GM12878 (cell line): ENCODE measurements at regions of chr22 and their contacts with region 1.

Region 1: GRCh38 chr22:37566903-37567820 is 6.9 kb downstream of the CDC42EP1 start:
- DNase-seq: peak; percentile 84
- ATAC-seq: peak; percentile 96
- H3K4me3 ChIP-seq: no peak overlapping the region
- H3K27ac ChIP-seq: no peak overlapping the region
- H3K4me1 ChIP-seq: peaks cover 11% of the 10 kb centered on the region
- H3K27me3 ChIP-seq: peaks cover 0 to 1% of the 10 kb centered on the region in 2 experiments; a peak in 2 of 4 replicates
- CTCF ChIP-seq: peak; percentile 95 to 97 (median 95)
- EP300 ChIP-seq: no peak; a peak in 1 of 4 replicates
- POLR2A ChIP-seq: no peak
- RAD21 ChIP-seq: peak; percentile 88

Region 2: GRCh38 chr22:37457093-37457893 is 109.9 kb before region 1 on chr22:
- CTCF ChIA-PET with region 1: interaction called, 15 read pairs
- POLR2A ChIA-PET with region 1: no interaction called
- RAD21 ChIA-PET with region 1: interaction called, 9 read pairs
- SMC1A ChIA-PET with region 1: interaction called, 3 read pairs
- in situ Hi-C with region 1: no loop called
- intact Hi-C with region 1: no loop called
- DNase-seq: peak; percentile 24
- ATAC-seq: peak; percentile 100
- H3K4me3 ChIP-seq: no peak overlapping the region
- H3K27ac ChIP-seq: no peak overlapping the region
- H3K4me1 ChIP-seq: no peaks in the 10 kb centered on the region
- H3K27me3 ChIP-seq: no peaks in the 10 kb centered on the region
- CTCF ChIP-seq: peak; percentile 88 to 98 (median 96)
- EP300 ChIP-seq: no peak
- POLR2A ChIP-seq: no peak
- RAD21 ChIP-seq: peak; percentile 97

Region 3: GRCh38 chr22:37486224-37486845 is 80.8 kb before region 1 on chr22 and contains the start of gene MFNG:
- CTCF ChIA-PET with region 1: interaction called, 5 read pairs
- POLR2A ChIA-PET with region 1: interaction called, 4 read pairs
- RAD21 ChIA-PET with region 1: interaction called, 10 read pairs
- SMC1A ChIA-PET with region 1: interaction called, 5 read pairs
- in situ Hi-C with region 1: no loop called
- intact Hi-C with region 1: no loop called
- DNase-seq: peak; percentile 26
- ATAC-seq: peak; percentile 79
- H3K4me3 ChIP-seq: peak within 1 kb of the TSS; percentile 94
- H3K27ac ChIP-seq: peak within 1 kb of the TSS; percentile 97
- H3K4me1 ChIP-seq: peaks cover 25% of the 10 kb centered on the region
- H3K27me3 ChIP-seq: no peaks in the 10 kb centered on the region
- CTCF ChIP-seq: no peak
- EP300 ChIP-seq: no peak
- POLR2A ChIP-seq: peak; percentile 78
- RAD21 ChIP-seq: no peak
- polyA plus RNA-seq, gene MFNG: 11.5 to 26.1 TPM

Region 4: DNA sequence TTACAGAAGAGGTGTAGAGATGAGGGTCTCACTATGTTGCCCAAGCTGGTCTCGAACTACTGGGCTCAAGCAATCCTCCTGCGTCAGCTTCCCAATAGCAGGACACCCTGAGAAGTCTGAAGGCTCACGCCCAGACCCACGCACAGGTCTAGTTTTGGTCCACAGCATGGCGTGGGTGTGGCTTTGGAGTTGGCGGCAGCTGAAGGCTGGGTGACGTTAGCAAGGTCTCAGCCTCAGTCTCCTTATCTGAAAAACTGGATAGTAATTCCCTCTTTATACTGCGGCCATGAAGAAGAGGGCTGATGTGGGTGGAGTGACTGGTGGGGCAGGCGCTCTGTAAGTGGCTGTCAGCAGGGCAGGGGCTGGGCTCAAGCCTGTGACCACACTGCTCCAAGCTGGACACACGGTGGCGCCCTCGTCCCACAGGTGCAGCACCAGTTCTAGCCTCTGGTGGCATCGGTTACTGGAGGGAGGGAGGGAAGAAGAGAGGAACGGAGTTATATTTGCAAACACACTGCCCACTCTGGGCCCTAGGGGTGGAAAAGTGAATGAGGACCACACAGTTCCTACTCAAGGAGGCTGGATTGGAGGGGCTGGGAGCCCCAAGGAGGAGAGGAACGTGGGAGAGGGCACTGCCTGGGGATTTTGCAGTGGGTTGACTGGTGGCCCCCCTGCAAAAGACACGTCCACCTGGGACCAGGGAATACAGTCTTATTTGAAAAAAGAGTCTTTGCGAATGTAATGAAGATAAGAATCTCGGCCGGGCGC is 28.4 kb before region 1 on chr22:
- CTCF ChIA-PET with region 1: interaction called, 541 read pairs
- POLR2A ChIA-PET with region 1: interaction called, 39 read pairs
- RAD21 ChIA-PET with region 1: interaction called, 237 read pairs
- SMC1A ChIA-PET with region 1: interaction called, 179 read pairs
- in situ Hi-C with region 1: no loop called
- intact Hi-C with region 1: loop called (anchors 1 kb)
- DNase-seq: peak; percentile 80
- ATAC-seq: peak; percentile 98
- H3K4me3 ChIP-seq: no peak overlapping the region
- H3K27ac ChIP-seq: no peak overlapping the region
- H3K4me1 ChIP-seq: peaks cover 27% of the 10 kb centered on the region
- H3K27me3 ChIP-seq: no peaks in the 10 kb centered on the region
- CTCF ChIP-seq: peak; percentile 96 to 99 (median 96)
- EP300 ChIP-seq: peak in 1 of 2 experiments; percentile 37; a peak in 1 of 4 replicates
- POLR2A ChIP-seq: no peak
- RAD21 ChIP-seq: peak; percentile 96

Region 5: DNA sequence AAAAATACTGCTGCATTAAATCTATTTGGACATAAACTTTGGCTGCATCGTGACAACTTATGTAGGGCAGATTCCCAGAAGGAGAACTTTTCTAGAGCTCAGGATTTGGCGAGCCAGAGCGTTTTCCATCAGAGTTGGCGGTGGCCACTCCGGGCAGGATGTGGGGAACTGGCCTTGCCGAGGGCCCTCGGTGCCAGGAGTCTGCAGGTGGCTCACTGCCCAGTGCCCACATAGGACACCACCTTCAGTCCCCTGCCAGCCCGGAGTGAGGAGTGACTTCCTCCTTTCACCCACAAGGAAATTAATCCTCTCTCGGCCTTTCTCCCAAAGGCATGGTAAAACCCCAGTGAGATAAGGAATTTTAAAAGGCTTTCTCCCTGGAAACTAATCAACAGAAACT is 14.3 kb after region 1 on chr22:
- CTCF ChIA-PET with region 1: interaction called, 528 read pairs
- POLR2A ChIA-PET with region 1: interaction called, 7 read pairs
- RAD21 ChIA-PET with region 1: interaction called, 25 read pairs
- SMC1A ChIA-PET with region 1: interaction called, 10 read pairs
- in situ Hi-C with region 1: no loop called
- intact Hi-C with region 1: no loop called
- DNase-seq: no peak
- ATAC-seq: no peak
- H3K4me3 ChIP-seq: no peak overlapping the region
- H3K27ac ChIP-seq: no peak overlapping the region
- H3K4me1 ChIP-seq: peaks cover 14% of the 10 kb centered on the region
- H3K27me3 ChIP-seq: no peaks in the 10 kb centered on the region
- CTCF ChIP-seq: no peak
- EP300 ChIP-seq: no peak
- POLR2A ChIP-seq: no peak
- RAD21 ChIP-seq: no peak

Region 6: GRCh38 chr22:37599153-37599552 is 32.0 kb after region 1 on chr22:
- CTCF ChIA-PET with region 1: interaction called, 18 read pairs
- POLR2A ChIA-PET with region 1: interaction called, 8 read pairs
- RAD21 ChIA-PET with region 1: interaction called, 3 read pairs
- SMC1A ChIA-PET with region 1: interaction called, 5 read pairs
- in situ Hi-C with region 1: no loop called
- intact Hi-C with region 1: no loop called
- DNase-seq: no peak
- ATAC-seq: no peak
- H3K4me3 ChIP-seq: no peak overlapping the region
- H3K27ac ChIP-seq: no peak overlapping the region
- H3K4me1 ChIP-seq: no peaks in the 10 kb centered on the region
- H3K27me3 ChIP-seq: 0 out of 4 replicates have a peak, but pooled peaks cover 0 to 1% of the 10 kb centered on the region in 2 experiments
- CTCF ChIP-seq: no peak
- EP300 ChIP-seq: no peak
- POLR2A ChIP-seq: no peak
- RAD21 ChIP-seq: no peak